SK-N-SH (cell line): ENCODE measurements at regions of chr11 and their contacts with region 1.

Region 1: GRCh38 chr11:86938900-86939880 is 16.0 kb downstream of the FZD4 start:
- DNase-seq: peak; percentile 41
- H3K4me3 ChIP-seq: no peak overlapping the region; a peak in 1 of 4 replicates
- H3K27ac ChIP-seq: no peak overlapping the region
- H3K4me1 ChIP-seq: peaks cover 0 to 24% of the 10 kb centered on the region in 2 experiments; a peak in 1 of 4 replicates
- H3K27me3 ChIP-seq: no peaks in the 10 kb centered on the region
- CTCF ChIP-seq: peak; percentile 68
- EP300 ChIP-seq: no peak
- RAD21 ChIP-seq: peak; percentile 79

Region 2: GRCh38 chr11:86955361-86956120 is 16.4 kb after region 1 on chr11 and contains the start of gene FZD4:
- CTCF ChIA-PET with region 1: interaction called, 36 read pairs
- POLR2A ChIA-PET with region 1: no interaction called
- DNase-seq: peak; percentile 98
- H3K4me3 ChIP-seq: peak within 1 kb of the TSS; percentile 71 to 95
- H3K27ac ChIP-seq: peak within 1 kb of the TSS; percentile 35 to 58; a peak in 3 of 4 replicates
- H3K4me1 ChIP-seq: peaks cover 9 to 22% of the 10 kb centered on the region in 2 experiments; a peak in 2 of 4 replicates
- H3K27me3 ChIP-seq: no peaks in the 10 kb centered on the region
- CTCF ChIP-seq: peak; percentile 39
- EP300 ChIP-seq: no peak
- RAD21 ChIP-seq: no peak
- polyA plus RNA-seq, gene FZD4: 0.72 and 0.93 TPM in 2 replicates

Region 3: DNA sequence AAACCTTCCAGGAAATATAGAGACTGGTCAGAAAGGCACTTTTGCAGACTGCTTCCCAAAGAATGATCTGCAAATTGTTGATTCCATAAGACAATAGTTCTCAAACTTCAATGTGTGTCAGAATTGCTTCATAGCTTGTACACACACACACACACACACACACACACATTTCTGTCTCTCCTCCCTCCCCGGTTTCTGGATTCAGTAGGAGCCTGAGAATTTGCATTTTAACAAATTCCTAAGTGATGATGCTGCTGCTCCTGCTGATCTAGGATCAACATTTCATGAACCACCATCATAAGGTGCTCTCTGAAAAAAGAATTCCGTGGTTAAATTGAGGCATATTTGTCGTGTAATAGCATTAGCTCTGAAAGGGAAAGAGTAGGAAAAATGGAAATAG is 51.3 kb after region 1 on chr11:
- CTCF ChIA-PET with region 1: interaction called, 14 read pairs
- POLR2A ChIA-PET with region 1: no interaction called
- DNase-seq: no peak
- H3K4me3 ChIP-seq: no peak overlapping the region
- H3K27ac ChIP-seq: peak overlapping the region in 1 of 2 experiments; percentile 33; a peak in 2 of 4 replicates
- H3K4me1 ChIP-seq: peaks cover 0 to 44% of the 10 kb centered on the region in 2 experiments; a peak in 1 of 4 replicates
- H3K27me3 ChIP-seq: no peaks in the 10 kb centered on the region
- CTCF ChIP-seq: no peak
- EP300 ChIP-seq: no peak
- RAD21 ChIP-seq: no peak

Region 4: GRCh38 chr11:87290304-87290922 is 351.2 kb after region 1 on chr11:
- CTCF ChIA-PET with region 1: interaction called, 38 read pairs
- POLR2A ChIA-PET with region 1: no interaction called
- DNase-seq: peak; percentile 50
- H3K4me3 ChIP-seq: no peak overlapping the region; a peak in 1 of 4 replicates
- H3K27ac ChIP-seq: no peak overlapping the region
- H3K4me1 ChIP-seq: no peaks in the 10 kb centered on the region; a peak in 1 of 4 replicates
- H3K27me3 ChIP-seq: no peaks in the 10 kb centered on the region
- CTCF ChIP-seq: peak; percentile 81
- EP300 ChIP-seq: no peak
- RAD21 ChIP-seq: peak; percentile 88

Region 5: GRCh38 chr11:87300640-87301380 is 361.6 kb after region 1 on chr11:
- CTCF ChIA-PET with region 1: interaction called, 20 read pairs
- POLR2A ChIA-PET with region 1: no interaction called
- DNase-seq: no peak
- H3K4me3 ChIP-seq: no peak overlapping the region
- H3K27ac ChIP-seq: no peak overlapping the region
- H3K4me1 ChIP-seq: peaks cover 0 to 3% of the 10 kb centered on the region in 2 experiments; a peak in 3 of 4 replicates
- H3K27me3 ChIP-seq: no peaks in the 10 kb centered on the region
- CTCF ChIP-seq: no peak
- EP300 ChIP-seq: no peak
- RAD21 ChIP-seq: no peak

Region 6: DNA sequence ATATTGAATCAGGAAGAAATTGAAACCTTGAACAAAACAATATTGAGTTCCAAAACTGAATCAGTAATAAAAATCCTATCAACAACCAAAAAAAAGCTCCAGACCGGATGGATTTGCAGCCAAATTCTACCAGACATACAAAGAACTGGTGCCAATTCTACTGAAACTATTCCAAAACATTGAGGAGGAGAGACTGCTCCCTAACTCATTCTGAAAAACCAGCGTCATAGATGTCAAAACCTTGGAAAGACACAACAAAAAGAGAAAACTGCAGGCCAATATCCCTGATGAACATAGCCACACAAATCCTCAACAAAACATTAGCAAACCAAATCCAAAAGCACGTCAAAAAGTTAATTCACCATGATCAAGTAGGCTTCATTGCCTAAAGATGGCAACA is 452.3 kb after region 1 on chr11:
- CTCF ChIA-PET with region 1: no interaction called
- POLR2A ChIA-PET with region 1: no interaction called
- DNase-seq: no peak
- H3K4me3 ChIP-seq: no peak overlapping the region
- H3K27ac ChIP-seq: no peak overlapping the region
- H3K4me1 ChIP-seq: no peaks in the 10 kb centered on the region
- H3K27me3 ChIP-seq: no peaks in the 10 kb centered on the region
- CTCF ChIP-seq: no peak
- EP300 ChIP-seq: no peak
- RAD21 ChIP-seq: no peak